Astrocyte of the cerebellum (primary cell): ENCODE measurements at regions of chr2 and their contacts with region 1.

Region 1: GRCh38 chr2:236459393-236459792 is 110.2 kb upstream of the ACKR3 start:
- DNase-seq: no peak
- H3K4me3 ChIP-seq: no peak overlapping the region
- CTCF ChIP-seq: no peak

Region 2: DNA sequence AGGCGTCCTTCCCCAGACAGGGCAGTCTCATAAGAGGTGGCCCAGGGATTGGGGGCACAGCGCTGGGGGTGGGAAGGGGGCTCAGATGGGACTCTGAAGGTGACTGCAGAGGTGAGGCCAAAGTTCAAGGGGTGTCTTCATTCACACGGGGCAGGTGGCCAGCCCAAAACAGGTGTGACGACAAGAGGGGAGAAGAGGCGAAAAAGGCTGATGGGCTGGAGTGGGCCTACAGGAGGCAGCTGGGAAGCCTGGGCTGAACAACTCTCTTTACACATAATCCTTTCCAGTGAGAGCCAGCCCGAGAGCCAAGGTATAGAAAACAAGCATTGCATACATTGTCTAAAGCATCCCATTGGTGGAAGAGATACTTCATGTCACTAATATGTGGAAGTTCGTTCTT is 64.3 kb before region 1 on chr2:
- in situ Hi-C with region 1: loop called (anchors 5 kb)
- DNase-seq: no peak
- H3K4me3 ChIP-seq: no peak overlapping the region
- CTCF ChIP-seq: no peak

Region 3: GRCh38 chr2:236562434-236562833 is 103.0 kb after region 1 on chr2:
- in situ Hi-C with region 1: loop called (anchors 5 kb)
- DNase-seq: no peak
- H3K4me3 ChIP-seq: no peak overlapping the region
- CTCF ChIP-seq: peak; percentile 48

Region 4: DNA sequence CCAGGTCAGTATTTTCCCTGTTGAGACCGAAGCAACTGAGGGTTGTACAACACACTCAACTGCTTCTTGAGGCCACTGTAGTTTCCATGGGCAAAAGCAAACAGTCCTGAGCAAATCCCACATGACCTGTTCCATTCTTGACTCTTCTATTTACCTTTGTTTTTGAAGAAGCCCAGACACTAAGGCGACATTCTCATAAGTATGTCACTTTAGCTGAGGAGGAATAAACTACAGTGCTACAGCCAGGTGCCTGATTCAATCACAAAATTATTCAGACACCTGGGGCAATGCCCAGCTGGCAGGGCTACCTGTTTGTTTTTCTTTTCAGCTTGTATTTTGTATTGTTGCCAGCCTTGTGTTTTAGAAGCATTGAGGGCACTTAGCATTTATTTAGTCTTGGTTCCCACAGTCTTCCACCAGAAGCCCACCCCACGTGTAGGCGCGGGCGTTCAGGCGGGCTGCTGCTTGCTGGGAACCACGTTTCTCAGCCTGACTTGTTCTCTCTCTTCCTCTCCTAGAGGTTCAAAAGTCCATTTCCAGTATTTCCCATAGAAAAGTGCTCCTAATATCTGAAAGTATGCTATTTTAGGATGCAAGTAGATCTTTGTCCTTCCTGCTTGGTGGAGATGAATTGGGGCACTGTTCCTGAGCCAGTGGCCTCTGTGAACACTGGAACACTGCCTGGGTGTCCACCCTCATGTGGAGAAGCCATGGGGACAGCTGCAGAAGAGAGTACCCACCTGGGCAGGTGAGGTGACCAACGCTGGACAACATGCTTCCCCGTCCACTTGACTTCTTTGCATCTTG is 527.3 kb after region 1 on chr2:
- in situ Hi-C with region 1: no loop called
- DNase-seq: no peak
- H3K4me3 ChIP-seq: no peak overlapping the region
- CTCF ChIP-seq: no peak